ENCODE measurements at regions of chr4 and their contacts with region 1.

Region 1: DNA sequence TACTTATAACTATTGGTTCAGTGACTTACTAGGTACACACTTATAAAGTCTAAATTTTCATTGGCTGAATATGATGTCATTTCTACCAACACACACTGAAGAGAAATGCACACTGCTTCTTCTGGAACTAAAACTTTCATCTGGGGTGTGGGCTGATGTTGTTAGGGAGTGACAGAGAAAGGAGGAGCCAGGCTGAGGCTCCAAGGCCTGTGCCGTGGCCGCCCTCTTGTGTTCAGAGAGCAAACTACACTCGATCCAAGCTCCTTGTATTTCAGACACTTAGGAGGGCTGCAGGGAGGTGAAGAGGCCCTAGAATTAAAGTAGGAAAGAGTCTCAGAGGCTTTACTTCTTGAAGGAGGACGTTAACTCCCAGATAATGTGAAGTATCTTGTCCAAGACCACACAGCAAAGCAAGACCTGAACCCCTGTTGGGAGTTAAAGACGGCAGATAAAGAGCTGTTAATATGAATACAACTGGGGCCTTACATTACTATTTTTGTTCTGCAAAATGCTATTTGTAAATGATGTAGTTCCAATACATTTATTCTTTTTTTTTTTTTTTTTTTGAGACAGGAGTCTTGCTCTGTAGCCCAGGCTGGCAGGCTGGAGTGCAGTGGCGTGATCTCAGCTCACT is 137.5 kb downstream of the AFAP1 start:
- DNase-seq: peak; percentile 86
- ATAC-seq: peak; percentile 91
- H3K4me3 Mint-ChIP-seq: no peak overlapping the region
- H3K27ac Mint-ChIP-seq: peak overlapping the region; percentile 31
- H3K4me1 Mint-ChIP-seq: peaks cover 10% of the 10 kb centered on the region
- H3K27me3 Mint-ChIP-seq: no peaks in the 10 kb centered on the region

Region 2: DNA sequence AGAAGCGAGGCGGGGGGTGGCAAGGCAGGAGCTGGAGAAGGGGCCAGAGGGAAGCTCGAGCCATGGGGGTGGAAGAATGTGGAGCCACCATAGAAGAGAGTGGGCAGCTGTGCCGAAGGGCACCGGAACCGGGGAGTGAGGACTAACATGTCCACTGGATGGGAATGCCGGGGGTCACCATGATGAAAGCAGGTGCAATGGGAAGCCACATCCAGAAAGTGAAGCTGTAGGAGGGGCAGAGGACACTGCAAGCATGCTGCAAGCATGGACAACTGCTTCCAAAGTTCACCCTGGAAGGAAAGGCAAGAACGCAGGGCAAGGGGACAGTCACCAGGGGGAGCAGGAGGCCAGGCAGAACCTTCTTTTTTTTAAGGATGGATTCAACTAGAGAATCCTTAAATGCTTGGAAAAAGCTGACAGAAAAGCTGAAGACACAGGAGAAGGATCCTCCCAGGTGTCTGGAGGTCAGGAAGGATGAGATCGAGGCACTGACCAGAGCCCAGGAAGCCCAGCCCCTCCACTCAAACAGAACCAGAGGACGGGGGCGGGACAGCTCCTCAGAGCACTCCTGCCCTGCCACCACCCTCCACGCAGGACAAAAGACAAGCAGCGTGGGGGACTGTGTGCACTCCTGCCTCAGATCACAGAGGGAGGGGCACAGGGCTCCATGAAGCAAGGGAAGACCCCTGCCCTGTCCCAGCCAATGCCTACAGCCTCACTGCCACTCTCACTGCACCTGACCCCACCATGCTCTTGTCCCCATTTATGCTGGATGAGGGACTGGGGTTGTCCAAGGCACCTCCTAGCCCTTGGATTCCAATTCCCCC is 31.8 kb before region 1 on chr4:
- CTCF ChIA-PET with region 1: interaction called, 38 read pairs
- DNase-seq: no peak
- ATAC-seq: no peak
- H3K4me3 Mint-ChIP-seq: no peak overlapping the region
- H3K27ac Mint-ChIP-seq: no peak overlapping the region
- H3K4me1 Mint-ChIP-seq: peaks cover 14% of the 10 kb centered on the region
- H3K27me3 Mint-ChIP-seq: no peaks in the 10 kb centered on the region

Region 3: DNA sequence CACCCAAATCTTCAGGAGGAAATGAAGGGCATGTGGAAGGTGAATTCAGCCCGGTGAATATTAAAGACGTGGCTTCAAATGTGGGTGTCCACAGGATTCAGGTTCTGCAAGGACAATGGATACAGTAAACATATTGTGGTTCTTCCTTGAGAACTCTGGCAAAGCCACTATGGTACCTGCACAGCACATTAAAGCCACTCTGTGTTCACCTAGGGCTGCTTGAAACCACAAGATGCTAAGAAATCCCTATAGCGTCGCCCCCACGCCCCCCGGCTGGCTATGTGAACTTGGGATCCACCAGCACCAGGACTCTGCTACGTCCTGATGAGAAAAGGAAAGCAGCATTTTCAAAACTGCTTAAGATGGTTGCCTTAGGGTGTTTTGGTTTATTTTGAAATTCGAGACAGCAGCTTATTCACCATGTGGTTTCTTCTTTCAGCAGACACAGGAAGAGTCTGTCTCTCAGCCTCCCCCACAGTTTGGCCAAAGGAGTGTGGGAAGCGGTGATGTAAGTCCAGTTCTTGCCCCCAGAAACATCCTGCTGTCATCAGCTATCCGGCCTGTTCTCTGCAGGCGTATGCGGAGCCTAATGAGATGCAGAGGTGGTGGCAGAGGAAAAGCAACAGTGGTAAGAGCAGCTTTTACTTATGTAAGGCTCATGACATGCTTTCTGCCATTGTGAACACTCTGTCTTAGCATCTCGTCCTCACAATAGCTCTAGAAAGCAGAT is 25.9 kb after region 1 on chr4:
- CTCF ChIA-PET with region 1: interaction called, 42 read pairs
- DNase-seq: peak; percentile 88
- ATAC-seq: peak; percentile 80
- H3K4me3 Mint-ChIP-seq: peak overlapping the region; percentile 59
- H3K27ac Mint-ChIP-seq: peak overlapping the region; percentile 90
- H3K4me1 Mint-ChIP-seq: peaks cover 48% of the 10 kb centered on the region
- H3K27me3 Mint-ChIP-seq: no peaks in the 10 kb centered on the region

Region 4: GRCh38 chr4:7850489-7850888 is 48.3 kb after region 1 on chr4:
- CTCF ChIA-PET with region 1: interaction called, 128 read pairs
- DNase-seq: no peak
- ATAC-seq: no peak
- H3K4me3 Mint-ChIP-seq: no peak overlapping the region
- H3K27ac Mint-ChIP-seq: no peak overlapping the region
- H3K4me1 Mint-ChIP-seq: peaks cover 38% of the 10 kb centered on the region
- H3K27me3 Mint-ChIP-seq: peaks cover 8% of the 10 kb centered on the region

Region 5: GRCh38 chr4:7939377-7940108 is 137.3 kb after region 1 on chr4 and contains the start of gene AFAP1:
- CTCF ChIA-PET with region 1: interaction called, 16 read pairs
- DNase-seq: peak; percentile 87
- ATAC-seq: peak; percentile 98
- H3K4me3 Mint-ChIP-seq: peak within 1 kb of the TSS; percentile 57
- H3K27ac Mint-ChIP-seq: no peak within 1 kb of the TSS
- H3K4me1 Mint-ChIP-seq: peaks cover 7% of the 10 kb centered on the region
- H3K27me3 Mint-ChIP-seq: peaks cover 21% of the 10 kb centered on the region
- total RNA-seq, gene AFAP1: 5.8 to 5.9 TPM